Natural killer cell (primary cell): ENCODE measurements at regions of chr7 and their contacts with region 1.

Region 1: GRCh38 chr7:151123822-151124464 is 37.7 kb downstream of the AGAP3 start:
- DNase-seq: peak; percentile 78 to 93
- ATAC-seq: peak; percentile 87 to 99 (median 98)
- H3K4me3 ChIP-seq: no peak overlapping the region
- H3K4me3 Mint-ChIP-seq: no peak overlapping the region
- H3K27ac ChIP-seq: no peak overlapping the region
- H3K27ac Mint-ChIP-seq: no peak overlapping the region
- H3K4me1 ChIP-seq: no peaks in the 10 kb centered on the region
- H3K4me1 Mint-ChIP-seq: peaks cover 0 to 6% of the 10 kb centered on the region in 2 donors
- H3K27me3 ChIP-seq: no peaks in the 10 kb centered on the region
- H3K27me3 Mint-ChIP-seq: no peaks in the 10 kb centered on the region
- CTCF ChIP-seq: peak; percentile 93

Region 2: GRCh38 chr7:151137076-151137675 is 13.2 kb after region 1 on chr7:
- intact Hi-C with region 1: no loop called
- DNase-seq: peak in 1 of 2 donors; percentile 12
- ATAC-seq: no peak
- H3K4me3 ChIP-seq: no peak overlapping the region
- H3K4me3 Mint-ChIP-seq: no peak overlapping the region
- H3K27ac ChIP-seq: no peak overlapping the region
- H3K27ac Mint-ChIP-seq: no peak overlapping the region
- H3K4me1 ChIP-seq: no peaks in the 10 kb centered on the region
- H3K4me1 Mint-ChIP-seq: no peaks in the 10 kb centered on the region
- H3K27me3 ChIP-seq: no peaks in the 10 kb centered on the region
- H3K27me3 Mint-ChIP-seq: no peaks in the 10 kb centered on the region
- CTCF ChIP-seq: no peak

Region 3: GRCh38 chr7:151172273-151173141 is 48.6 kb after region 1 on chr7:
- intact Hi-C with region 1: loop called (anchors 1 kb)
- DNase-seq: peak; percentile 81 to 91
- ATAC-seq: peak; percentile 91 to 96 (median 91)
- H3K4me3 ChIP-seq: no peak overlapping the region
- H3K4me3 Mint-ChIP-seq: no peak overlapping the region
- H3K27ac ChIP-seq: no peak overlapping the region
- H3K27ac Mint-ChIP-seq: no peak overlapping the region
- H3K4me1 ChIP-seq: peaks cover 12% of the 10 kb centered on the region
- H3K4me1 Mint-ChIP-seq: peaks cover 10 to 20% of the 10 kb centered on the region in 2 donors
- H3K27me3 ChIP-seq: peaks cover 9% of the 10 kb centered on the region
- H3K27me3 Mint-ChIP-seq: peaks cover 41 to 48% of the 10 kb centered on the region in 2 donors
- CTCF ChIP-seq: peak; percentile 100

Region 4: GRCh38 chr7:151244196-151244840 is 120.4 kb after region 1 on chr7:
- intact Hi-C with region 1: loop called (anchors 2 kb)
- DNase-seq: peak; percentile 60 to 84
- ATAC-seq: peak; percentile 49 to 63 (median 55)
- H3K4me3 ChIP-seq: no peak overlapping the region
- H3K4me3 Mint-ChIP-seq: peak overlapping the region; percentile 79
- H3K27ac ChIP-seq: no peak overlapping the region
- H3K27ac Mint-ChIP-seq: peak overlapping the region; percentile 38 to 92
- H3K4me1 ChIP-seq: peaks cover 51% of the 10 kb centered on the region
- H3K4me1 Mint-ChIP-seq: peaks cover 25 to 44% of the 10 kb centered on the region in 2 donors
- H3K27me3 ChIP-seq: peaks cover 24% of the 10 kb centered on the region
- H3K27me3 Mint-ChIP-seq: peaks cover 0 to 23% of the 10 kb centered on the region in 2 donors
- CTCF ChIP-seq: peak; percentile 81

Region 5: DNA sequence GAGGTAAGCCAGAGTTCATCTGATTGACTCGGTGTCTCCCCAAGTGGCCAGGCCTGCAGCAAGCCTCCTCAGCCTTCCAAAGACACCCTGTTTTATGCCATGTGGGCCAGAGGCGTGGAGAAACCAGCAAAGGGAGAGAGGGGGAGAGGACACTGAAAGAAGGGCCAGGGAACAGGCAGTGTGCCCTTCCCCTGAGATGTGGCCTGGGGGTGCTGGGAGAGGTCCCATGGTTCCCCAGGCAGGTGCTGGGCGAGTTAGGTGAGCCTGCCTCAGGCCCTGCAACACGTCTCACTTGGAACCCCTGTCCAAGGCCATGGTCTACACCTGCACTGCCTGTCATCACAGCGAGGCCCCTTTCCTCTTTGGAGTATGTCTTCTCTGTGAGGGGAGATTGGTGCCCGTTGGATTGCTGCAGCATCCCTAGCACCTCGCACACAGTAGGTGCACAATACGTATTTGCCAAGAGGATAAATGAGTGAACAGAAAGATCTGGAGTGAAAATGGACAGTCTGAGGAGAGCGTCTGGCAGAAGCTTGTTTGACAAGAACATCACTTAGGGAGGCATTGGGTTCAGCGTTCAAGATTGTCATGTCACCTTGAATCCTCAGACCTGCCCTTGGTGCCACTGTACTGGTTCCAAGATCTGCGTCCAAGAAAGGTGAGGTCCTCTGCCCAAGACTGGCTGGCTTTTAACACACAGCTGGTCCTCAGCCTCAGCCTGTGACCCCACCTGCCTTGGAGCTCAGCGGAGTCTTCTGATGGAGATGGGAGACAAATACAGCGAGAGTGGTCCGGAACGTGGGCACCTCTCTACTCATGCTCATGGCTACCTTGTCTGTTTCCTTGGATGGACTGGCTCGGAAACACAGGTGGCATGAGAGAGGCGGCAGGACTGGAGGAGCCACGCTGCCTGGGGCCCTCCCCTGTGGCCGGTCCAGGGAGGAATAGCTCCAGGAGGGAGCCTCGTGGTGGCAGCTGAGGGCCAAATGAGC is 177.8 kb after region 1 on chr7:
- intact Hi-C with region 1: loop called (anchors 2 kb)
- DNase-seq: no peak
- ATAC-seq: no peak
- H3K4me3 ChIP-seq: no peak overlapping the region
- H3K4me3 Mint-ChIP-seq: no peak overlapping the region
- H3K27ac ChIP-seq: no peak overlapping the region
- H3K27ac Mint-ChIP-seq: no peak overlapping the region
- H3K4me1 ChIP-seq: peaks cover 8% of the 10 kb centered on the region
- H3K4me1 Mint-ChIP-seq: peaks cover 12 to 14% of the 10 kb centered on the region in 2 donors
- H3K27me3 ChIP-seq: peaks cover 12% of the 10 kb centered on the region
- H3K27me3 Mint-ChIP-seq: peaks cover 18 to 33% of the 10 kb centered on the region in 2 donors
- CTCF ChIP-seq: no peak